Psoas muscle (tissue), 8 donors: ENCODE measurements at regions of chr17 and their contacts with region 1.

Region 1: GRCh38 chr17:45241328-45242011 is 19.8 kb downstream of the FMNL1 start:
- DNase-seq: no peak
- ATAC-seq: peak in 1 of 4 donors; percentile 27
- H3K4me3 ChIP-seq: no peak overlapping the region
- H3K27ac ChIP-seq: no peak overlapping the region
- H3K4me1 ChIP-seq: no peaks in the 10 kb centered on the region
- H3K27me3 ChIP-seq: peaks cover 0 to 13% (median 2%) of the 10 kb centered on the region in 3 donors
- CTCF ChIP-seq: no peak

Region 2: GRCh38 chr17:45225964-45226530 is 15.4 kb before region 1 on chr17:
- intact Hi-C with region 1: loop called in 1 of 2 experiments (anchors 2 kb)
- DNase-seq: peak; percentile 70 to 76
- ATAC-seq: no peak
- H3K4me3 ChIP-seq: no peak overlapping the region
- H3K27ac ChIP-seq: no peak overlapping the region
- H3K4me1 ChIP-seq: peaks cover 18% of the 10 kb centered on the region
- H3K27me3 ChIP-seq: peaks cover 0 to 11% (median 6%) of the 10 kb centered on the region in 3 donors
- CTCF ChIP-seq: no peak